ENCODE measurements at regions of chr11 and their contacts with region 1.

Region 1: GRCh38 chr11:8011981-8012444 is 24.9 kb downstream of the EIF3F start:
- DNase-seq: no peak
- H3K4me3 ChIP-seq: no peak overlapping the region
- H3K27ac ChIP-seq: no peak overlapping the region
- H3K4me1 ChIP-seq: peaks cover 3 to 11% (median 10%) of the 10 kb centered on the region in 4 experiments; a peak in 5 of 7 replicates
- H3K27me3 ChIP-seq: peaks cover 0 to 15% (median 12%) of the 10 kb centered on the region in 4 experiments; a peak in 6 of 7 replicates
- CTCF ChIP-seq: no peak
- EP300 ChIP-seq: no peak
- POLR2A ChIP-seq: no peak
- RAD21 ChIP-seq: no peak

Region 2: DNA sequence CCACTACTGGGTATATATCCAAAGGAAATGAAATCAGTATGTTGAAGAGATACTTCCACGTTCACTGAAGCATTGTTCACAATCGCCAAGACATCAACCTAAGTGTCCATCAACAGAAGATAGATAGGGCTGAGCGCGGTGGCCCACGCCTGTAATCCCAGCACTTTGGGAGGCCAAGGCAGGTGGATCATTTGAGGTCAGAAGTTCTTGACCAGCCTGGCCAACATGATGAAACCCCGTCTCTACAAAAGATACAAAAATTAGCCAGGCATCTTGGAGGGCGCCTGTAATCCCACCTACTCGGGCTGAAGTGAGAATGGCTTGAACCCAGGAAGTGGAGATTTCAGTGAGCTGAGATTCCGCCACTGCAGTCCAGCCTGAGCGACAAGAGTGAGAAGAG is 12.2 kb before region 1 on chr11:
- CTCF ChIA-PET with region 1: interaction called, 5 read pairs
- POLR2A ChIA-PET with region 1: interaction called, 14 read pairs
- DNase-seq: no peak
- H3K4me3 ChIP-seq: no peak overlapping the region
- H3K27ac ChIP-seq: no peak overlapping the region
- H3K4me1 ChIP-seq: no peaks in the 10 kb centered on the region
- H3K27me3 ChIP-seq: no peaks in the 10 kb centered on the region
- CTCF ChIP-seq: no peak
- EP300 ChIP-seq: no peak
- POLR2A ChIP-seq: no peak
- RAD21 ChIP-seq: no peak

Region 3: DNA sequence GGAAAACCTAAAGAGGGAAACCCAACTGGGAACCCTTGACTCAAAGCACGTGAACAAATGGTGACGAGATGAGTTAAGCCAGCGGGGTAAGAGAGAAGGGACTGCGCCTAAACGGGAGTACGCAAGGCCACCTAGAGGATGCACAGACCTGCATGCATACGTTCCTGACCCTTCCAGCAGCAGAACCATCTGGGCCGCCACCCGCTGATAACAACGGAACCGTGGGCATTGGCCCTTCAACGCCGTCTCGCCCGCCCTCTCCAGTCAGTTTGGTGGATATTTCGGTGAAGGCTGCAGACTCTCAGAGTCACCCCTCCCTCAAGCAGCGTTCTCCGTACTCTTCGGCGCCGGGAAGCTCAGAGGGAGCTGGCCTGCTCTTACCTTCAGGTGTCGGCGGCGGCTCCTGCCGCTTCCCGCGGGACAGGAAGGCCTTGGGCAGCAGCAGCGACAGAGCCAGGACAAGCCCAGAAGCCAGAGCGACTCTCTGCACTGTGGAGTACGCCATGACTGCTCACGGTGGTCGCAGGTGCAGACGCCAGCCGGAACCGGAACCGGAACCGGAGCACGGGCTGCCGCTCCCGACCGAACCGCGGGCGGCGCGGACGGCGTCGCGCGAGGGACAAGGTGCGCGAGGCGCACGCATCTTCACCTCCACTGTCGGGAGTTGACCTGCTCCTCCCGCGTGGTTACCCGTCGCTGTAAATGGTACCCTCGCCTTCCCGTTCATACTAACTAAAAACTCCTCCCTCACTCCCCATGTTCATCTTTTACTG is 156.7 kb after region 1 on chr11 and contains the start of gene RIC3:
- CTCF ChIA-PET with region 1: no interaction called
- POLR2A ChIA-PET with region 1: no interaction called
- DNase-seq: peak; percentile 19 to 80
- H3K4me3 ChIP-seq: peak within 1 kb of the TSS; percentile 49 to 91 (median 81)
- H3K27ac ChIP-seq: peak within 1 kb of the TSS; percentile 47; the same call in 1 of the 2 replicates
- H3K4me1 ChIP-seq: no peaks in the 10 kb centered on the region; a peak in 1 of 7 replicates
- H3K27me3 ChIP-seq: no peaks in the 10 kb centered on the region; a peak in 1 of 7 replicates
- CTCF ChIP-seq: peak in 2 of 3 experiments; percentile 49 to 56; a peak in 2 of 4 replicates
- EP300 ChIP-seq: no peak
- POLR2A ChIP-seq: peak in 1 of 2 experiments; percentile 86; a peak in 2 of 3 replicates
- RAD21 ChIP-seq: no peak; a peak in 2 of 4 replicates
- total RNA-seq, gene RIC3: 15.5 and 16.6 TPM in 2 replicates